Mammary epithelial cell (primary cell): ENCODE measurements at regions of chr5 and their contacts with region 1.

Region 1: DNA sequence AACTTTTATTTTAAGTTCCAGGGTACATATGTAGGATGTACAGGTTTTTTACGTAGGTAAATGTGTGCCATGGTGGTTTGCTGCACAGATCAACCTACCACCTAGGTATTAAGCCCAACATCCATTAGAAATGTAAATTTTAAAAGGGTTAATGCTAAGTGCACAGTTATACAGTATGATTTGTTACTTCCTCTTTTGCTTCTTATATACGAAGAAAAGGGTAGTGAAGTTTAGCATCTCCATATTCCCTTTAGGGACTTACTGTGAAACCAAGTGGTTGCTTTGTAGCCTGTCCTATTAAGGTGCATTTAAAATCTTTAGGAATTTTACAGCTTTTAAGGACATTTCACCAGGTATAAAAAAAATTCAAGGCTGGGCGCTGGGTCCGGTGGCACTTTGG is 46.4 kb downstream of the RBM27 start:
- DNase-seq: no peak
- H3K4me3 ChIP-seq: no peak overlapping the region
- H3K27ac ChIP-seq: no peak overlapping the region
- H3K4me1 ChIP-seq: no peaks in the 10 kb centered on the region
- H3K27me3 ChIP-seq: no peaks in the 10 kb centered on the region
- CTCF ChIP-seq: no peak

Region 2: GRCh38 chr5:146130440-146131045 is 119.3 kb before region 1 on chr5:
- CTCF ChIA-PET with region 1: no interaction called
- dilution Hi-C with region 1: no loop called
- in situ Hi-C with region 1: loop called in 1 of 2 experiments (anchors 25 kb)
- intact Hi-C with region 1: no loop called
- DNase-seq: peak; percentile 1
- H3K4me3 ChIP-seq: no peak overlapping the region
- H3K27ac ChIP-seq: no peak overlapping the region
- H3K4me1 ChIP-seq: no peaks in the 10 kb centered on the region
- H3K27me3 ChIP-seq: no peaks in the 10 kb centered on the region
- CTCF ChIP-seq: peak; percentile 54 to 72

Region 3: DNA sequence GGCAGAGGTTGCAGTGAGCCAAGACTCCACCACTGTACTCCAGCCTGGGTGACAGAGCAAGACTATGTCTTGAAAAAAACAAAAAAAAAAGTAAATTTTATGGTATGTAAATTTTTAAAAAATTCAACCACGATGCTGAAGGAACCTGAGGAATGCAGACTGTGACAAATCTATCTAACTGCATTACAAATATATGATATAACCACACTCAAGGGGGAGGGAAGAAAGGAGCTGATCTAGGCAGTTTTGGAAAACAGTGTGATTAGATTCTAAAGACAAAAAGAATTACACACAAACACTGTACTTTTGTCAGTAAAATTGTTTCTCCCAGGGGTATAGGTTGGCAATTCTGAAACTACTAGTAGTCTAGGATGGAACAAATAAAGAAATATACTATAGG is 84.3 kb before region 1 on chr5:
- CTCF ChIA-PET with region 1: no interaction called
- dilution Hi-C with region 1: loop called (anchors 10 kb)
- in situ Hi-C with region 1: no loop called
- intact Hi-C with region 1: no loop called
- DNase-seq: no peak
- H3K4me3 ChIP-seq: no peak overlapping the region
- H3K27ac ChIP-seq: no peak overlapping the region
- H3K4me1 ChIP-seq: no peaks in the 10 kb centered on the region
- H3K27me3 ChIP-seq: no peaks in the 10 kb centered on the region
- CTCF ChIP-seq: no peak

Region 4: DNA sequence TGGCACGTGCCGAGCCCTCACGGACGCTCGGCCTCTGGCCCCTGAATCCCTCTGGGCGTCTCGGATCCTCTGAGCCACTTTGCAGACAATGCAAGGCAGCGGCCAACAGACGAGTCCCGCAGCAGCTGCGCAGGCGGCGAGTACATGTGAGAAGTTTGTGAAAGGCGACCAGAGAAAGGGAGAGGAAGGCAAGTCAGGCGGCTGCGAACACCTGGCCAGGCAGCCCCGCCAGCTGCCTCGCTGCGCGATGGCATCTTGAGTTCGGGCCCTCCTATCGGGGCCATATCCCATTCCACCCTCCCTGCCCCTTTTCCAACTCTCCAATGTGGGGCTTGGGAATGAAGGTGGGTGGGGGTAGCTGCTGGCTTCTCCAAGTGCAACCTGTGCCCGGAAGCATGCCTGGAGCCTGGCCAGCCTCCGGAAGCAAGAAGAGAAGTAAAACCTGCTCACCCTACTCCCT is 84.3 kb after region 1 on chr5:
- CTCF ChIA-PET with region 1: no interaction called
- dilution Hi-C with region 1: no loop called
- in situ Hi-C with region 1: no loop called
- intact Hi-C with region 1: no loop called
- DNase-seq: no peak
- H3K4me3 ChIP-seq: no peak overlapping the region
- H3K27ac ChIP-seq: no peak overlapping the region
- H3K4me1 ChIP-seq: no peaks in the 10 kb centered on the region
- H3K27me3 ChIP-seq: peaks cover 46% of the 10 kb centered on the region
- CTCF ChIP-seq: no peak